Body of pancreas (tissue), 4 donors: ENCODE measurements at regions of chrX and their contacts with region 1.

Region 1: DNA sequence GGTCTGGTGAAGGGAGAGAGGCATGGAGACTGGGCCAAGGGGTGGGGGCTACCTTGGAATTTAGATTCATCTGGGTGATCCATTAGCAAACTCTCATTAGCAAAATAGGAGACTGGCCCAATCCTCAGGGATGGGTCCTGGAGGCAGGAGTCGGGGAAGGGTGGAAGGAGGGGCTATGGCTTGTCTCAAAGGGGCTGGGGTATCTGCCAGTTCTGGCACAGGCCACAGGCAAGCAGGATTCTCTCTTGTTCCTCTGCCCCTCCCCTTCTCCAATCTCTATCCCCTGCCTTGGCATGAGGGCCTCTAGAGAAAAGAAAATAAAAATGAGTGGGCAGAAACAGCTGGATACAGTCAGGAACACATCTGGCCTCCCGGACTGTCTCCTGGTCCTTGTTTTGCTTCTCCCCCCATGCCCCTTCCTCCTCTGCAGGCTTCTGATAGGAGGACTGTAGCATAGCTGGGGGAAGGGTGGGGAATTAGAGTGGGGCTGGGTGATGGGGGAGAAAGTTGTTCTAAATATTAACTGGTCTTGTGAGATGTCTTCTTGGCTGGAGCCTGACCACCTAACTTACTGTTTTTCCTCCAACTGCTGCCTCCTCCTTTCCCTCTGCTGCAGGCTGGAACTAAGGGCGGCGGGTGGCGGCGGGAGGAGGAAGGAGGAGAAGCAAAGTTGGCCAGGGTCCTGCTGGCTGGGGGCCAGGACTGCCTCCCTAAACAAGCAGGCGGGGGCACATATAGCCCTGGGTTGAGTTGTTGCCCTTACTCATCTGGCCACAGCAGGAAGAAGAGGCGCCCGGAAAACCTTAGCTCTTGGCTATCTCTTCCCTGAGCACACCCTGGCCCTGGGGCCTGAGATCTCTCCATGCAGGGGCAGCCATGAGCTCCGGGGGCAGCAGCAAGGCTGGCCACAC is 53.3 kb upstream of the LAS1L start:
- DNase-seq: peak; percentile 34 to 62 (median 58)
- ATAC-seq: no peak
- H3K4me3 ChIP-seq: no peak overlapping the region
- H3K27ac ChIP-seq: no peak overlapping the region
- H3K4me1 ChIP-seq: no peaks in the 10 kb centered on the region
- H3K27me3 ChIP-seq: no peaks in the 10 kb centered on the region
- CTCF ChIP-seq: no peak
- POLR2A ChIP-seq: no peak

Region 2: GRCh38 chrX:65644621-65645270 is 56.9 kb after region 1 on chrX:
- intact Hi-C with region 1: no loop called
- DNase-seq: peak; percentile 64 to 85 (median 74)
- ATAC-seq: peak; percentile 92
- H3K4me3 ChIP-seq: no peak overlapping the region
- H3K27ac ChIP-seq: peak overlapping the region in 3 of 4 donors; percentile 15 to 63 (median 59)
- H3K4me1 ChIP-seq: peaks cover 25% of the 10 kb centered on the region
- H3K27me3 ChIP-seq: no peaks in the 10 kb centered on the region
- CTCF ChIP-seq: no peak
- POLR2A ChIP-seq: no peak

Region 3: GRCh38 chrX:65948103-65948502 is 360.2 kb after region 1 on chrX:
- intact Hi-C with region 1: no loop called
- DNase-seq: no peak
- ATAC-seq: no peak
- H3K4me3 ChIP-seq: no peak overlapping the region
- H3K27ac ChIP-seq: no peak overlapping the region
- H3K4me1 ChIP-seq: no peaks in the 10 kb centered on the region
- H3K27me3 ChIP-seq: no peaks in the 10 kb centered on the region
- CTCF ChIP-seq: no peak
- POLR2A ChIP-seq: no peak

Region 4: DNA sequence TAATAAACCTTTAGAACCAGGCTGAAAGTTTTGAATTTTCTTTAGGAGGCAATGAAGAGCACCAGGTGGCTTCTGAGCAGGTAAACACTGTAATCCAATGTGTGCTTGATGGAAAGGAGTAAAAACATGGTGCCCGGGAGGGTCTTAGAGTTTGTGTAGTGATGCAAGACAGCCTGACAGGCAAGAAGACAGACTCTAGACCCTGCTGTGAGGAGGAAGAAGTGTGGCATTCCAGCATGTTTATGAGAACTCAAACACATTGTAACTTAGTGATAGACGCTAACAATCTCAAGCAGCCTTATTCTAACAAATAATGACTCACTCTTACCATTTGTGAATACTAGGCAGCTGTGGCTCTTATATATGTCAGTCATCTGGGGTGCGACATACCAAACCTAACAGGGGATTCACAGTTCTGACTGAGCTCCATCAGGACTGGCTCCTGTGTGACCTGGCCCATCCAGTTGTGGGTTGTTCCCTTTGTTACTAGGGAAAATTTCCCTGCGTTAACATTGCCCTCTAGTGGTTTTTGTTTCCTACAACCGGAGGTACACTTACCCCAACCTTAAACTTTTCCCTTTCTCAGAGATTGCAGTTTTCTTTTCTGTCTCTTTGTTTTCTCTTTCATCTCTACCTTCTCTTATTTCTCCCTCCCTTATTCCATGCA is 398.2 kb after region 1 on chrX:
- intact Hi-C with region 1: loop called (anchors 5 kb)
- DNase-seq: peak; percentile 10 to 33 (median 26)
- ATAC-seq: no peak
- H3K4me3 ChIP-seq: no peak overlapping the region
- H3K27ac ChIP-seq: no peak overlapping the region
- H3K4me1 ChIP-seq: no peaks in the 10 kb centered on the region
- H3K27me3 ChIP-seq: no peaks in the 10 kb centered on the region
- CTCF ChIP-seq: peak; percentile 29 to 60 (median 47)
- POLR2A ChIP-seq: no peak